Endothelial cell of umbilical vein (primary cell): ENCODE measurements at regions of chr2 and their contacts with region 1.

Region 1: GRCh38 chr2:205947621-205948495 is 138.1 kb downstream of the INO80D start:
- DNase-seq: peak; percentile 74
- H3K4me3 ChIP-seq: no peak overlapping the region
- H3K27ac ChIP-seq: no peak overlapping the region
- H3K4me1 ChIP-seq: peaks cover 17% of the 10 kb centered on the region
- H3K27me3 ChIP-seq: peaks cover 3 to 7% of the 10 kb centered on the region in 2 experiments
- CTCF ChIP-seq: peak; percentile 84 to 94
- POLR2A ChIP-seq: no peak

Region 2: GRCh38 chr2:205766779-205767359 is 181.0 kb before region 1 on chr2:
- CTCF ChIA-PET with region 1: interaction called, 4 read pairs
- POLR2A ChIA-PET with region 1: no interaction called
- dilution Hi-C with region 1: no loop called
- intact Hi-C with region 1: loop called (anchors 2 kb)
- DNase-seq: peak; percentile 66
- H3K4me3 ChIP-seq: no peak overlapping the region
- H3K27ac ChIP-seq: no peak overlapping the region
- H3K4me1 ChIP-seq: peaks cover 28% of the 10 kb centered on the region
- H3K27me3 ChIP-seq: no peaks in the 10 kb centered on the region
- CTCF ChIP-seq: peak; percentile 79 to 86
- POLR2A ChIP-seq: no peak

Region 3: GRCh38 chr2:205776139-205776538 is 171.7 kb before region 1 on chr2:
- CTCF ChIA-PET with region 1: interaction called, 9 read pairs
- POLR2A ChIA-PET with region 1: no interaction called
- dilution Hi-C with region 1: no loop called
- intact Hi-C with region 1: loop called (anchors 1 kb)
- DNase-seq: no peak
- H3K4me3 ChIP-seq: no peak overlapping the region
- H3K27ac ChIP-seq: no peak overlapping the region
- H3K4me1 ChIP-seq: peaks cover 9% of the 10 kb centered on the region
- H3K27me3 ChIP-seq: no peaks in the 10 kb centered on the region
- CTCF ChIP-seq: peak; percentile 63 to 71
- POLR2A ChIP-seq: no peak

Region 4: GRCh38 chr2:205885492-205886099 is 62.3 kb before region 1 on chr2:
- CTCF ChIA-PET with region 1: interaction called, 13 read pairs
- POLR2A ChIA-PET with region 1: no interaction called
- dilution Hi-C with region 1: no loop called
- intact Hi-C with region 1: loop called (anchors 1 kb)
- DNase-seq: peak; percentile 76
- H3K4me3 ChIP-seq: no peak overlapping the region
- H3K27ac ChIP-seq: no peak overlapping the region
- H3K4me1 ChIP-seq: peaks cover 5% of the 10 kb centered on the region
- H3K27me3 ChIP-seq: peaks cover 0 to 2% of the 10 kb centered on the region in 2 experiments
- CTCF ChIP-seq: peak; percentile 90 to 93
- POLR2A ChIP-seq: no peak

Region 5: GRCh38 chr2:205903638-205904037 is 44.2 kb before region 1 on chr2:
- CTCF ChIA-PET with region 1: interaction called, 59 read pairs
- POLR2A ChIA-PET with region 1: no interaction called
- dilution Hi-C with region 1: no loop called
- intact Hi-C with region 1: loop called (anchors 1 kb)
- DNase-seq: peak; percentile 30
- H3K4me3 ChIP-seq: no peak overlapping the region
- H3K27ac ChIP-seq: no peak overlapping the region
- H3K4me1 ChIP-seq: no peaks in the 10 kb centered on the region
- H3K27me3 ChIP-seq: peaks cover 0 to 5% of the 10 kb centered on the region in 2 experiments
- CTCF ChIP-seq: peak; percentile 40 to 69
- POLR2A ChIP-seq: no peak

Region 6: GRCh38 chr2:205934443-205934842 is 13.4 kb before region 1 on chr2:
- CTCF ChIA-PET with region 1: interaction called, 145 read pairs
- POLR2A ChIA-PET with region 1: no interaction called
- dilution Hi-C with region 1: no loop called
- intact Hi-C with region 1: loop called (anchors 1 kb)
- DNase-seq: no peak
- H3K4me3 ChIP-seq: no peak overlapping the region
- H3K27ac ChIP-seq: no peak overlapping the region
- H3K4me1 ChIP-seq: peaks cover 19% of the 10 kb centered on the region
- H3K27me3 ChIP-seq: no peaks in the 10 kb centered on the region
- CTCF ChIP-seq: no peak
- POLR2A ChIP-seq: no peak

Region 7: GRCh38 chr2:205959521-205959920 is 11.7 kb after region 1 on chr2:
- CTCF ChIA-PET with region 1: interaction called, 12 read pairs
- POLR2A ChIA-PET with region 1: no interaction called
- dilution Hi-C with region 1: no loop called
- intact Hi-C with region 1: no loop called
- DNase-seq: no peak
- H3K4me3 ChIP-seq: no peak overlapping the region
- H3K27ac ChIP-seq: no peak overlapping the region
- H3K4me1 ChIP-seq: peaks cover 5% of the 10 kb centered on the region
- H3K27me3 ChIP-seq: peaks cover 0 to 6% of the 10 kb centered on the region in 2 experiments
- CTCF ChIP-seq: no peak
- POLR2A ChIP-seq: no peak

Region 8: GRCh38 chr2:206004004-206004693 is 56.3 kb after region 1 on chr2:
- CTCF ChIA-PET with region 1: no interaction called
- POLR2A ChIA-PET with region 1: no interaction called
- dilution Hi-C with region 1: no loop called
- intact Hi-C with region 1: no loop called
- DNase-seq: no peak
- H3K4me3 ChIP-seq: no peak overlapping the region
- H3K27ac ChIP-seq: no peak overlapping the region
- H3K4me1 ChIP-seq: no peaks in the 10 kb centered on the region
- H3K27me3 ChIP-seq: no peaks in the 10 kb centered on the region
- CTCF ChIP-seq: peak; percentile 41 to 53
- POLR2A ChIP-seq: no peak

Region 9: DNA sequence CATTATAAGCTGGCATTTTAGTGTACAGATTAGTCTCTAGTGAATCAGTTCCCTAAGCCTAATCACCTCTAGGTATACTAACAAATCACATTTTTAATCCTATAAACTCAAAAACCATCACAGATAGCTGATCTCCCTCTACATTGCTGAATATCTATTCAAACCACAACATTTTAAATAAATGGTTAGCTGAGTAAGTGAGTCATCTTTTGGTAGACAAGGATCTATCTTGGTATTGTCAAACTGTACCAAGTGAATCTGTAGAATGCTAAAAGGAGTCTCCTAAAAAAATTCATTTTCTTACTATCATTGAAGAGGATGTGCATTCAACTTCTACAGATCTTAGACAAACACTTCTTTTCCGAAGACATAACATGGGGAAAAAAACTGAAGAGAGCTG is 97.4 kb after region 1 on chr2:
- CTCF ChIA-PET with region 1: no interaction called
- POLR2A ChIA-PET with region 1: no interaction called
- dilution Hi-C with region 1: no loop called
- intact Hi-C with region 1: no loop called
- DNase-seq: no peak
- H3K4me3 ChIP-seq: no peak overlapping the region
- H3K27ac ChIP-seq: no peak overlapping the region
- H3K4me1 ChIP-seq: no peaks in the 10 kb centered on the region
- H3K27me3 ChIP-seq: no peaks in the 10 kb centered on the region
- CTCF ChIP-seq: no peak
- POLR2A ChIP-seq: no peak